ENCODE measurements at regions of chrX and their contacts with region 1.

Region 1: DNA sequence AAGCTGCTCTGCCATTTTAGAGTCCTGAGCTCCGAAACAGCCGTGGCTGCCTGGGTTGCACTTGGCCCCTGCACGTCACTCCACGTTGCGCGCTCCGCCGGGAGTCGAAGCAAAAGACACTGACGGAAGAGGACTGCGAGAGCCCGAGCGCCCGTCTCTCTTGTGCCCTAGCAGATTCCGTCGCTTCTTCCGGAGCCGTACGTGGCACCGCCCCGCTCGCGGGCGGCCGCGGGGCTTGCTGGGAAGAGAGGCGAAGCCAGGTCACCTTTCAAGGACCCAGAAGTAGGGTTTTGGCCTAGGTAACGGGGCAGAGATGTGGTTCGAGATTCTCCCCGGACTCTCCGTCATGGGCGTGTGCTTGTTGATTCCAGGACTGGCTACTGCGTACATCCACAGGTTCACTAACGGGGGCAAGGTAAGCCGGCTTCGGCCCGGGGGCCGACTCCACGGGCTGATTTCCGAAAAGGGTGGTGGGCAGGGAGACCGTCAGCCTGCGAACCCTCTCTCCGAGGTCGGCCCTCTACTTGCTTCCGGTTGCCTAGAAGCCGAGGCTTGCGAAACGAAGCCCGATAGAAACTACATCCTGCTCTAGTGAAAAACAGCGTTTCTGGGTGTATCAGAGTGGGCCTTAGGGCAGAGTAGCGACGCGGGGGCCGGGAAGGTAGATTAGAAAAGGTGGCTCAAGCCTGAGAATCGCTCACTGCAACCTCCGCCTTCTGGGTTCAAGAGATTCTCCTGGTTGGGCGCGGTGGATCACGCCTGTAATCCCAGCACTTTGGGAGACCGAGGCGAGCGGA is at the starts of genes NDUFA1 and RNF113A:
- DNase-seq: peak; percentile 75
- ATAC-seq: peak; percentile 92
- H3K4me3 Mint-ChIP-seq: peak within 1 kb of the TSS; percentile 96
- H3K27ac Mint-ChIP-seq: peak within 1 kb of the TSS; percentile 98
- H3K4me1 Mint-ChIP-seq: peaks cover 23% of the 10 kb centered on the region
- H3K27me3 Mint-ChIP-seq: no peaks in the 10 kb centered on the region
- CTCF ChIP-seq: no peak
- total RNA-seq, gene NDUFA1: 65.3 and 88.0 TPM in 2 replicates
- total RNA-seq, gene RNF113A: 27.1 and 28.1 TPM in 2 replicates

Region 2: DNA sequence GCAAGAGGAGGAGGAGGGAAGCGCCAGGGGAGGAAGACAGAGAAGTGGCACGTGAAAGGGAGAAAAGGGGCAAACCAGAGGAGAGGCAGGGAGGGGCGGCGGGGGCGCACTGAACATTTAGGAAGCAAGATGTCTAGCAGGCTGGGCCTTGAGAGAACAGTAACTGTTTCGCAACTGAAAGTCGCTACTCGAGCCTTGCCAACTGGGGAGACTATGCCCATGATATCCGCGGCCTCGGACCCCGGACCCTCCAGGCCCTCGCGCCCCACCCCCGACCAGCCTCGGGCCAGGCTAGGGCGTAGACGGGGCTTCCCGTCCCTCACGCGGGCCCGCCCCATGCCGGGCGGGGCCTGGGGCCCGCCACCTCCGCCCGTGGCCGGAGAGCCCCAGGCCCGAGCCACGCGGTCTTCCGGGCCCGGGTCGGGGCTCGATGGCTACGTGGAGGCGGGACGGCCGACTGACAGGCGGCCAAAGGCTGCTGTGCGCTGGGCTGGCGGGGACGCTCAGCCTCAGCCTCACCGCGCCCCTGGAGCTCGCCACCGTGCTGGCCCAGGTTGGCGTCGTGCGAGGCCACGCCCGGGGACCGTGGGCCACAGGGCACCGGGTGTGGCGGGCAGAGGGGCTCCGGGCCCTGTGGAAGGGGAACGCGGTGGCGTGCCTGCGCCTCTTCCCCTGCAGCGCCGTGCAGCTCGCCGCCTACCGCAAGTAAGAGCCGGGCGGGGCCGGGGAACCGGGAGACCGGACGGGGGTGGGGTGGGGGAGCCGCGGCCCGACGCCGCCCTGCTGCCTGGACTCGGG is 472.6 kb before region 1 on chrX and contains the start of gene SLC25A43:
- CTCF ChIA-PET with region 1: no interaction called
- POLR2A ChIA-PET with region 1: no interaction called
- intact Hi-C with region 1: loop called (anchors 10 kb)
- DNase-seq: peak; percentile 49
- ATAC-seq: peak; percentile 93
- H3K4me3 Mint-ChIP-seq: peak within 1 kb of the TSS; percentile 93
- H3K27ac Mint-ChIP-seq: peak within 1 kb of the TSS; percentile 92
- H3K4me1 Mint-ChIP-seq: peaks cover 32% of the 10 kb centered on the region
- H3K27me3 Mint-ChIP-seq: no peaks in the 10 kb centered on the region
- CTCF ChIP-seq: no peak
- total RNA-seq, gene SLC25A43: 11.0 and 11.9 TPM in 2 replicates

Region 3: GRCh38 chrX:119482481-119483480 is 389.0 kb before region 1 on chrX:
- CTCF ChIA-PET with region 1: interaction called, 3 read pairs
- POLR2A ChIA-PET with region 1: interaction called, 4 read pairs
- intact Hi-C with region 1: loop called (anchors 5 kb)
- DNase-seq: peak; percentile 53
- ATAC-seq: peak; percentile 90
- H3K4me3 Mint-ChIP-seq: peak overlapping the region; percentile 84
- H3K27ac Mint-ChIP-seq: no peak overlapping the region
- H3K4me1 Mint-ChIP-seq: peaks cover 9% of the 10 kb centered on the region
- H3K27me3 Mint-ChIP-seq: no peaks in the 10 kb centered on the region
- CTCF ChIP-seq: no peak

Region 4: GRCh38 chrX:119574394-119575266 is 297.2 kb before region 1 on chrX and contains the start of gene UBE2A:
- CTCF ChIA-PET with region 1: interaction called, 3 read pairs
- POLR2A ChIA-PET with region 1: interaction called, 3 read pairs
- intact Hi-C with region 1: loop called (anchors 1 kb)
- DNase-seq: peak; percentile 78
- ATAC-seq: peak; percentile 94
- H3K4me3 Mint-ChIP-seq: peak within 1 kb of the TSS; percentile 93
- H3K27ac Mint-ChIP-seq: peak within 1 kb of the TSS; percentile 91
- H3K4me1 Mint-ChIP-seq: peaks cover 38% of the 10 kb centered on the region
- H3K27me3 Mint-ChIP-seq: no peaks in the 10 kb centered on the region
- CTCF ChIP-seq: no peak
- total RNA-seq, gene UBE2A: 65.9 and 73.5 TPM in 2 replicates

Region 5: GRCh38 chrX:119685225-119686066 is 186.4 kb before region 1 on chrX:
- CTCF ChIA-PET with region 1: no interaction called
- POLR2A ChIA-PET with region 1: interaction called, 8 read pairs
- intact Hi-C with region 1: loop called (anchors 5 kb)
- DNase-seq: no peak
- ATAC-seq: peak; percentile 65
- H3K4me3 Mint-ChIP-seq: peak overlapping the region; percentile 83
- H3K27ac Mint-ChIP-seq: peak overlapping the region; percentile 99
- H3K4me1 Mint-ChIP-seq: peaks cover 89% of the 10 kb centered on the region
- H3K27me3 Mint-ChIP-seq: no peaks in the 10 kb centered on the region
- CTCF ChIP-seq: no peak

Region 6: GRCh38 chrX:119852382-119853353 is 19.1 kb before region 1 on chrX and contains the start of gene UPF3B:
- CTCF ChIA-PET with region 1: no interaction called
- POLR2A ChIA-PET with region 1: interaction called, 33 read pairs
- intact Hi-C with region 1: loop called (anchors 1 kb)
- DNase-seq: peak; percentile 76
- ATAC-seq: peak; percentile 96
- H3K4me3 Mint-ChIP-seq: peak within 1 kb of the TSS; percentile 97
- H3K27ac Mint-ChIP-seq: peak within 1 kb of the TSS; percentile 96
- H3K4me1 Mint-ChIP-seq: peaks cover 12% of the 10 kb centered on the region
- H3K27me3 Mint-ChIP-seq: no peaks in the 10 kb centered on the region
- CTCF ChIP-seq: no peak
- total RNA-seq, gene UPF3B: 14.0 and 15.9 TPM in 2 replicates

Region 7: GRCh38 chrX:119943185-119943988 is 71.6 kb after region 1 on chrX and contains the start of gene NKAP:
- CTCF ChIA-PET with region 1: no interaction called
- POLR2A ChIA-PET with region 1: interaction called, 9 read pairs
- intact Hi-C with region 1: loop called (anchors 1 kb)
- DNase-seq: peak; percentile 70
- ATAC-seq: peak; percentile 85
- H3K4me3 Mint-ChIP-seq: peak within 1 kb of the TSS; percentile 84
- H3K27ac Mint-ChIP-seq: peak within 1 kb of the TSS; percentile 86
- H3K4me1 Mint-ChIP-seq: peaks cover 23% of the 10 kb centered on the region
- H3K27me3 Mint-ChIP-seq: peaks cover 2% of the 10 kb centered on the region
- CTCF ChIP-seq: no peak
- total RNA-seq, gene NKAP: 11.6 and 11.9 TPM in 2 replicates

Region 8: GRCh38 chrX:119991005-119991771 is 119.4 kb after region 1 on chrX:
- CTCF ChIA-PET with region 1: no interaction called
- POLR2A ChIA-PET with region 1: no interaction called
- intact Hi-C with region 1: no loop called
- DNase-seq: peak; percentile 16
- ATAC-seq: peak; percentile 31
- H3K4me3 Mint-ChIP-seq: peak overlapping the region; percentile 73
- H3K27ac Mint-ChIP-seq: no peak overlapping the region
- H3K4me1 Mint-ChIP-seq: peaks cover 21% of the 10 kb centered on the region
- H3K27me3 Mint-ChIP-seq: peaks cover 24% of the 10 kb centered on the region
- CTCF ChIP-seq: no peak

Measured in activated B cell treated with CpG ODN at 0.5 μM for 24 hours (primary cell).